Activated CD8-positive, alpha-beta T cell treated with anti-CD3 and anti-CD28 coated beads, Interleukin-2, amount 10 ng/mL, durations not matched to agents 7 days and 5 days (primary cell): ENCODE measurements at regions of chr5 and their contacts with region 1.

Region 1: GRCh38 chr5:35777358-35778087 is 79.2 kb upstream of the IL7R start:
- DNase-seq: peak; percentile 86
- ATAC-seq: peak; percentile 64
- H3K4me3 Mint-ChIP-seq: no peak overlapping the region
- H3K27ac Mint-ChIP-seq: peak overlapping the region; percentile 45
- H3K4me1 Mint-ChIP-seq: peaks cover 47% of the 10 kb centered on the region
- H3K27me3 Mint-ChIP-seq: no peaks in the 10 kb centered on the region

Region 2: DNA sequence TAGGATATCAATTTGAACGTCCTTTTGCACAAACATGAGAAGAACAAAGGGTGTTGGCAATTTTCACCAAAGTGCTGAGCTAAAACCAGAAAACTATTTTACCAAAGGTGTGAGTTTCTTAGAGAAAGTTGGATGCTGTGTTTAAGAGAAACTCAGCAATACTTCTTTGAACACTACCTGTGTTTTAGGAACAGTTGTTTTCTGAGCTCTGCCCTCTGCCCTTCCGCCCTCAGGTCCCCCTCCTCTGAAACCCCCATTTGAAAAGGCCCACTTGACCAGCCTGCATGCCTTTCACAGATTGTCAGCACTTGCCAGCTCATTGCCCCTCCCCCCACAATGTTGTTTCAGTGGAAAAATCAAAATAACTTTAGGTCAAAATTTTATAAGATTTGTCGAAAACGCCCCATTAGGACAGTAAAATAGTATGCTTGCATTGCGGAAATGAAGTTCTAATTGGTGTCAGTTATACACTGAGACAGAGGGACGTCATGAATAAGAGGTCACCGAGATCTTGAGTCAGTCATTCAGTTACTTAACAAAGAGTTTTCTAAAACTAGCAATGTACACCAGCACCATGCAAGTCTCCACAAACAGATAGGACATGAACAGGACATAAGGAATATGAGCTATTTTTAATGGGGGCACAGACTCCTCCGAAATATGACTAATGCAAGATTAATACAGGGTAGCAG is 17.3 kb after region 1 on chr5:
- CTCF ChIA-PET with region 1: interaction called, 36 read pairs
- POLR2A ChIA-PET with region 1: no interaction called
- DNase-seq: no peak
- ATAC-seq: no peak
- H3K4me3 Mint-ChIP-seq: no peak overlapping the region
- H3K27ac Mint-ChIP-seq: peak overlapping the region; percentile 59
- H3K4me1 Mint-ChIP-seq: peaks cover 67% of the 10 kb centered on the region
- H3K27me3 Mint-ChIP-seq: no peaks in the 10 kb centered on the region

Region 3: GRCh38 chr5:35830587-35830986 is 53.1 kb after region 1 on chr5:
- CTCF ChIA-PET with region 1: interaction called, 21 read pairs
- POLR2A ChIA-PET with region 1: interaction called, 5 read pairs
- DNase-seq: peak; percentile 48
- ATAC-seq: peak; percentile 61
- H3K4me3 Mint-ChIP-seq: peak overlapping the region; percentile 35
- H3K27ac Mint-ChIP-seq: peak overlapping the region; percentile 79
- H3K4me1 Mint-ChIP-seq: peaks cover 83% of the 10 kb centered on the region
- H3K27me3 Mint-ChIP-seq: no peaks in the 10 kb centered on the region

Region 4: GRCh38 chr5:35863159-35863558 is 85.6 kb after region 1 on chr5:
- CTCF ChIA-PET with region 1: interaction called, 62 read pairs
- POLR2A ChIA-PET with region 1: interaction called, 8 read pairs
- DNase-seq: no peak
- ATAC-seq: peak; percentile 29
- H3K4me3 Mint-ChIP-seq: peak overlapping the region; percentile 41
- H3K27ac Mint-ChIP-seq: peak overlapping the region; percentile 41
- H3K4me1 Mint-ChIP-seq: peaks cover 74% of the 10 kb centered on the region
- H3K27me3 Mint-ChIP-seq: no peaks in the 10 kb centered on the region

Region 5: DNA sequence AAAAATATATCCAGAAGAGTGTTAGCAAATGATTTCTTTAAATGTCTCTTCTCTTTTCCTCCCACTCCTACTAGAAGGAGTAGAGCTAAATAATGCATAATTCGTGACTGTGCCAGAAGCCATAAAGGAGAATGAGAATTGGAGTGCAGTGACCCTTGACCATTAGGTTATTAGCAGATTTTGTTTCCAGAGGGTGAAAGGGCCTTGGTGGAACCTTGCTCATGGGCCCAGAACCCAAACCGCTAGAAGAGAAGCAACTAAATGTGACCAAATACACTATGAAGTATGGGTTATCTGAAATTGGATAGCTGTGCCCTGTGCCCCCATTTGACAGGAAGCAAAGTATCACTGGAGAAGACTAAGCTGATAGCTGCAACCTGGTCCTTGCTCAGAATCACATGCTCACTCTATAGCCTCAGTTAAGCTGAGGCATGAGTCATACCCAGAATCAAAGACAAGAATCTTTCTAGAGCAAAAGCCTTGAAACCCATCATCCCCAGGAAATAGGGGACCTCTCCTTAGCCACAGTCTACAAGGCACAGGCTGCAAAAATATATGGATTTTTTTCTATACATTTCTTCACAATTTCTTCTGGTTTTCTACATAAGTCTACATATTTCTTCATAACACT is 124.6 kb after region 1 on chr5:
- CTCF ChIA-PET with region 1: interaction called, 10 read pairs
- POLR2A ChIA-PET with region 1: interaction called, 3 read pairs
- DNase-seq: peak; percentile 65
- ATAC-seq: peak; percentile 93
- H3K4me3 Mint-ChIP-seq: no peak overlapping the region
- H3K27ac Mint-ChIP-seq: peak overlapping the region; percentile 65
- H3K4me1 Mint-ChIP-seq: peaks cover 68% of the 10 kb centered on the region
- H3K27me3 Mint-ChIP-seq: no peaks in the 10 kb centered on the region